T-cell (primary cell): ENCODE measurements at regions of chr10 and their contacts with region 1.

Region 1: GRCh38 chr10:128035557-128035973 is 90.7 kb downstream of the MKI67 start:
- DNase-seq: peak in 30 of 35 experiments; percentile 17 to 78 (median 52)
- ATAC-seq: peak; percentile 65 to 77 (median 72)
- H3K4me3 ChIP-seq: no peak overlapping the region
- H3K4me3 Mint-ChIP-seq: no peak overlapping the region
- H3K27ac ChIP-seq: no peak overlapping the region
- H3K27ac Mint-ChIP-seq: no peak overlapping the region
- H3K4me1 ChIP-seq: peaks cover 0 to 4% of the 10 kb centered on the region in 2 experiments
- H3K4me1 Mint-ChIP-seq: peaks cover 0 to 5% (median 2%) of the 10 kb centered on the region in 3 donors
- H3K27me3 ChIP-seq: no peaks in the 10 kb centered on the region
- H3K27me3 Mint-ChIP-seq: no peaks in the 10 kb centered on the region

Region 2: DNA sequence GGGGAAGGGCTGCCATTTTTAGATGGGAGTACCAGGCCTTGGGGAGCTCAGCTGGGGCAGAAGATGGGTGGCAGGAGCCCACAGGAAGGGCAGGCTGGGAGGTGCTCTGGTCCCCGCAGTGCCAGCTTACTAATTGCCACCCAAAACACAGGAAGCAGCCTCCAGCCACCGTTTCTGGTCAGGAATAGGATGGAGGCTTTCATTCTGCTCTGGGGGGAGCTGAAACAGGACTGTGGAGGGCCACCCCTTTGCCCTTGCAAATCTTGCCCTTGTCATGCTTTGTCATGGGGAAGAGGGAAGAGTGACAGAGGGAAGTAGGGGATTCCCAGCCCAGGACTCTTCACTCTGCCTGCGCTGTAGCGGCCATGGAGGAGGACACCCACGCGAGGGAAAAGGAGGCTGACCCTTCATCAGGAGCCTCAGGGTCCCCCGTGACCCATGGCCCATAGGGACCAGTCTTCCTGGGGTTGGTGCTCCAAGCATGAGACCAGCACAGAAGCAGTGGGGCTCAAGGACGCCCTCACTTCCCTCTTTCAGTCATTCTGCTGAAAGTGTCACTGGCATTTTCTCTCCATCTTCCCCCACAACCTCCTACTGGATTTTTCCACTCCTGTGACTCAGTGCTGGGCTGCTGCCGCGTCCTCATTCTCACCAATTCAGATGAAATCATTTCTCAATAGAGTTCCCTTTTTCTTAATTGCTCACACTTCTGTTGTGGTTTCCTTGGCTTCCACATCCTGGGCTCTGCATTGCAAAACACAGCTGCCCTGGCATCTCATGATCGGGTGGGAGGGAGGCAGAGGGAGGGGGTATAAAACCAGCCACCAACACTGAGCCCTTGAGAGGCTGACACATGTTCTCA is 28.8 kb after region 1 on chr10:
- CTCF ChIA-PET with region 1: interaction called, 51 to 89 read pairs
- POLR2A ChIA-PET with region 1: interaction called in 1 of 2 experiments, 10 read pairs
- DNase-seq: peak in 34 of 35 experiments; percentile 46 to 82 (median 70)
- ATAC-seq: peak; percentile 70 to 74 (median 72)
- H3K4me3 ChIP-seq: peak overlapping the region; percentile 27 to 44
- H3K4me3 Mint-ChIP-seq: peak overlapping the region; percentile 37 to 80 (median 73)
- H3K27ac ChIP-seq: peak overlapping the region; percentile 81
- H3K27ac Mint-ChIP-seq: peak overlapping the region; percentile 88 to 91
- H3K4me1 ChIP-seq: peaks cover 37 to 88% of the 10 kb centered on the region in 2 experiments
- H3K4me1 Mint-ChIP-seq: peaks cover 76 to 81% (median 77%) of the 10 kb centered on the region in 3 donors
- H3K27me3 ChIP-seq: no peaks in the 10 kb centered on the region
- H3K27me3 Mint-ChIP-seq: no peaks in the 10 kb centered on the region